ENCODE measurements at regions of chr10 and their contacts with region 1.

Region 1: DNA sequence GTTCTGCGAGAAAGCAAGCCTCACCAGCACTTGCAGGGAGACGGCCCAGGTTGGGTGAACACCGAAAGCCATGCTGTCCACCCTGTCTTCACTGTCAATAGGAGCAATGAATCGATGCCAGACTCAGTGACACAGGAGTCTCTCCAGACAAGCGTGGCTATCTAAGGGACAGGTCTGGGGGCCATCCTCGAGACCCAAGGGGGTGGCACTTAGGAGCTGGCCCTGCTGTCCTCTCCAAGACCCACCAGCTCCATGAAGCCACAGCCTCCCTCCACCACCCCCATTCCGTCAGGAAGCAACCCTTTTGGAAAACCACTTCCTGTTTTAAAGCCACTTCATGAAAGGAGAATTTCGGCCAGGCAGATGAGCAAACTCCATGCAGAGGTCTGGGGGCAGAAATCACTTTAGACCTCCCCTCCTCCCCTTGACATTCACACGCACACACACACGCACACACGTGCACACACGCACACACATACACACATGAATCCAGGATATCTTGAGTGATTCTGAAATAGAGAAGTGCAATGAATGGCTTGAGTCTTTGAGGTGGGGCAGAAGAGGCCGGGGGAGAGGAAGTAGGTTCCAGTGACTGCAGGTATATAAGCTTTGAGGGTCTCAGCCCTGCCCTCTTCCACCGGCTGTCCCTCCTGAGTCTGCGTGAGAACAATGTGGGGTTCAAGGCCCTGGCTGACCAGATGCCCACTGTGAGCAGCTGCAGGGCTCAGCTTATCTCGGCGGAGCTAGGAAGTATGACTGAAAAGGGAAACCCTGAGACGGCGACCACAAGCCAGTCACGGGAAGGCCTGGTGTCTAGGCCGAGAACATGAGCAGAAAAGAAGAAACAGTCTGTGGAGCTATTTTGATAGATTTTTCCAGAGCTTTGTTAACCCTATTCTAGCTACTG is 25.0 kb downstream of the RGS10 start:
- DNase-seq: peak in 14 of 35 experiments; percentile 33 to 68 (median 40)
- ATAC-seq: peak; percentile 17 to 39 (median 33)
- H3K4me3 ChIP-seq: peak overlapping the region; percentile 8 to 20
- H3K4me3 Mint-ChIP-seq: peak overlapping the region; percentile 47 to 77 (median 57)
- H3K27ac ChIP-seq: peak overlapping the region; percentile 90
- H3K27ac Mint-ChIP-seq: peak overlapping the region; percentile 95 to 97
- H3K4me1 ChIP-seq: peaks cover 43 to 71% of the 10 kb centered on the region in 2 experiments
- H3K4me1 Mint-ChIP-seq: peaks cover 67 to 78% (median 69%) of the 10 kb centered on the region in 3 donors
- H3K27me3 ChIP-seq: no peaks in the 10 kb centered on the region
- H3K27me3 Mint-ChIP-seq: no peaks in the 10 kb centered on the region

Region 2: DNA sequence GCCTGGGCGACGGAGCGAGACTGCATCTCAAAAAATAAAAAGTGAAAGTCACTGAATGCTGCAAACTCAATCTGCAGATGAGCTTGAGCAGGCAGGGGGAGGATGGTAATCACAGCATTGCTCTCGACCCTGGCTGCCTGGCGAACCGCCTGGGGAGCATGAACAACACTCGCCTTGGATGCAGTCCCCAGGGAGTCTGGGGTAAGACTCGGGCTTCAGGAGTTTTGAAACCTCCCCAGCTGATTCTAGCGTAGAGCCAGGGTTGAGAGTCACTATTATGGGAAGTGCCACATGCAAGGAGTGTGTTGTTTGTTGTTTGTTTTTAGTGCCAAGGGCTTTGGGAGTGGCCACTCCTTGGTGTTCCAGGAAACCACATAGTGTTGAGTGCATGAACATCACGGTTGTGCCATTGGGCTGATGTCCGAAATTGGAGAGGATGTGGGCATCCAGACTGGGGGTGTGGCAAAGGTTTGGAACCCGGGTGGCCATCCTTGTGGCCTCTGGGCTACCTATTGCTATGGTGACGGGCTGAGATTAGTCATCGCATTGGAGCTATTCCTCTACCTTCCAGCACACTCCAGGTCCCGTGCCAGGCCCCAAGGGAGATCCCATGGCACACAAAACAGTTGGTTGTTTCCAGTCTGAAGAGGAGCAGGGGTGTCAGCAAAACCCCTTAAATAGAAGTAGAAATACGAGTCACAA is 67.6 kb before region 1 on chr10:
- CTCF ChIA-PET with region 1: no interaction called
- POLR2A ChIA-PET with region 1: no interaction called
- DNase-seq: no peak
- ATAC-seq: no peak
- H3K4me3 ChIP-seq: no peak overlapping the region
- H3K4me3 Mint-ChIP-seq: peak overlapping the region in 1 of 3 donors; percentile 6
- H3K27ac ChIP-seq: no peak overlapping the region
- H3K27ac Mint-ChIP-seq: no peak overlapping the region
- H3K4me1 ChIP-seq: peaks cover 0 to 12% of the 10 kb centered on the region in 2 experiments
- H3K4me1 Mint-ChIP-seq: peaks cover 10 to 16% (median 10%) of the 10 kb centered on the region in 3 donors
- H3K27me3 ChIP-seq: peaks cover 0 to 5% of the 10 kb centered on the region in 2 experiments
- H3K27me3 Mint-ChIP-seq: no peaks in the 10 kb centered on the region

Region 3: GRCh38 chr10:119542988-119543813 is 25.7 kb after region 1 on chr10:
- CTCF ChIA-PET with region 1: interaction called in 1 of 2 experiments, 12 read pairs
- POLR2A ChIA-PET with region 1: interaction called in 1 of 2 experiments, 6 read pairs
- DNase-seq: peak; percentile 18 to 77 (median 51)
- ATAC-seq: peak; percentile 49 to 58 (median 54)
- H3K4me3 ChIP-seq: peak overlapping the region; percentile 66 to 95
- H3K4me3 Mint-ChIP-seq: peak overlapping the region; percentile 83 to 92 (median 89)
- H3K27ac ChIP-seq: no peak overlapping the region
- H3K27ac Mint-ChIP-seq: peak overlapping the region; percentile 87 to 93
- H3K4me1 ChIP-seq: peaks cover 10 to 41% of the 10 kb centered on the region in 2 experiments
- H3K4me1 Mint-ChIP-seq: peaks cover 29 to 43% (median 40%) of the 10 kb centered on the region in 3 donors
- H3K27me3 ChIP-seq: peaks cover 0 to 7% of the 10 kb centered on the region in 2 experiments
- H3K27me3 Mint-ChIP-seq: peaks cover 0 to 5% of the 10 kb centered on the region in 2 donors

Region 4: GRCh38 chr10:119686439-119687191 is 169.1 kb after region 1 on chr10:
- CTCF ChIA-PET with region 1: no interaction called
- POLR2A ChIA-PET with region 1: no interaction called
- DNase-seq: peak; percentile 41 to 91 (median 66)
- ATAC-seq: peak; percentile 89 to 92 (median 91)
- H3K4me3 ChIP-seq: peak overlapping the region in 1 of 2 donors; percentile 35
- H3K4me3 Mint-ChIP-seq: peak overlapping the region; percentile 58 to 72 (median 69)
- H3K27ac ChIP-seq: peak overlapping the region; percentile 21
- H3K27ac Mint-ChIP-seq: peak overlapping the region; percentile 76 to 83
- H3K4me1 ChIP-seq: peaks cover 0 to 12% of the 10 kb centered on the region in 2 experiments
- H3K4me1 Mint-ChIP-seq: peaks cover 5 to 24% (median 21%) of the 10 kb centered on the region in 3 donors
- H3K27me3 ChIP-seq: peaks cover 0 to 5% of the 10 kb centered on the region in 2 experiments
- H3K27me3 Mint-ChIP-seq: peaks cover 0 to 3% of the 10 kb centered on the region in 2 donors

Region 5: DNA sequence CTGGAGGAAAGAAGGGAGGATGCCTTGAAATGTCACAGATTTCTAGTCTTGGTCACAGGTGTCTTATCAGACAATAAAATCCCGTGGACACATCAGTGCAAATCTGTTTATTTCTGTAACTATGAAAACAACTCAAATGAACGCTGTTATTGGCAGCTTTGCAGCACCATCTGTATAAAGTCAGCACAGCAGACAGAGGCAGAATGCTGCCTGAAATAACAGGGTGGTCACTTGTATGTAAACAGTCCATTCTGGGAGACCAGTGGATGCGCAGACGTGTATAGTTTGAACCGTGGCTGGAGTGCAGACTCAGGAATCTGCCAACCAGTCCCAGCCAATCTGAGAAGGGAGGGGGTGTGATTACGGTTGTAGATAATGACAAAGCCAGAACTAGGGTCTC is 429.8 kb after region 1 on chr10:
- CTCF ChIA-PET with region 1: no interaction called
- POLR2A ChIA-PET with region 1: no interaction called
- DNase-seq: no peak
- ATAC-seq: no peak
- H3K4me3 ChIP-seq: no peak overlapping the region
- H3K4me3 Mint-ChIP-seq: no peak overlapping the region
- H3K27ac ChIP-seq: no peak overlapping the region
- H3K27ac Mint-ChIP-seq: no peak overlapping the region
- H3K4me1 ChIP-seq: no peaks in the 10 kb centered on the region
- H3K4me1 Mint-ChIP-seq: no peaks in the 10 kb centered on the region
- H3K27me3 ChIP-seq: no peaks in the 10 kb centered on the region
- H3K27me3 Mint-ChIP-seq: no peaks in the 10 kb centered on the region

Measured in T-cell (primary cell).